PC-3 (cell line): ENCODE measurements at regions of chr3 and their contacts with region 1.

Region 1: GRCh38 chr3:100277255-100277800 is 16.5 kb downstream of the TBC1D23 start:
- DNase-seq: no peak
- ATAC-seq: no peak
- H3K4me3 ChIP-seq: no peak overlapping the region
- H3K27ac ChIP-seq: no peak overlapping the region
- H3K4me1 ChIP-seq: no peaks in the 10 kb centered on the region
- H3K27me3 ChIP-seq: no peaks in the 10 kb centered on the region
- CTCF ChIP-seq: no peak

Region 2: DNA sequence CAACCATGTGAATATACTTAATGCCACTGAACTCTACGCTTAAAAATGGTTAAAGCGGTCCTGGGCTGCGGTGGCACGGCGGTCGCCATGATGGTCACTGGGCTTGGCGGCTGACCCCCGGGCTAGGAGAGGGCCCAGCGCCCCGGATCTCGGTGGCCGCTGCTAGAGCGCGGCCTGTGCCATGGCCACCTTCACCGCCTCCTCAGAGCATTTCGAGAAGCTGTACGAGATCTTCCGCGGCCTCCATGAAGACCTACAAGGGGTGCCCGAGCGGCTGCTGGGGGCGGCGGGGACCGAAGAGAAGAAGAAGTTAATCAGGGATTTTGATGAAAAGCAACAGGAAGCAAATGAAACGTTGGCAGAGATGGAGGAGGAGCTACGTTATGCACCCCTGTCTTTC is 52.1 kb before region 1 on chr3:
- CTCF ChIA-PET with region 1: no interaction called
- POLR2A ChIA-PET with region 1: interaction called, 12 read pairs
- intact Hi-C with region 1: no loop called
- DNase-seq: no peak
- ATAC-seq: no peak
- H3K4me3 ChIP-seq: no peak overlapping the region
- H3K27ac ChIP-seq: no peak overlapping the region
- H3K4me1 ChIP-seq: no peaks in the 10 kb centered on the region
- H3K27me3 ChIP-seq: no peaks in the 10 kb centered on the region
- CTCF ChIP-seq: no peak